GM10248 (cell line): ENCODE measurements at regions of chr10 and their contacts with region 1.

Region 1: GRCh38 chr10:44932517-44933450 is 21.6 kb downstream of the TMEM72 start:
- DNase-seq: peak; percentile 86
- CTCF ChIP-seq: peak; percentile 97

Region 2: DNA sequence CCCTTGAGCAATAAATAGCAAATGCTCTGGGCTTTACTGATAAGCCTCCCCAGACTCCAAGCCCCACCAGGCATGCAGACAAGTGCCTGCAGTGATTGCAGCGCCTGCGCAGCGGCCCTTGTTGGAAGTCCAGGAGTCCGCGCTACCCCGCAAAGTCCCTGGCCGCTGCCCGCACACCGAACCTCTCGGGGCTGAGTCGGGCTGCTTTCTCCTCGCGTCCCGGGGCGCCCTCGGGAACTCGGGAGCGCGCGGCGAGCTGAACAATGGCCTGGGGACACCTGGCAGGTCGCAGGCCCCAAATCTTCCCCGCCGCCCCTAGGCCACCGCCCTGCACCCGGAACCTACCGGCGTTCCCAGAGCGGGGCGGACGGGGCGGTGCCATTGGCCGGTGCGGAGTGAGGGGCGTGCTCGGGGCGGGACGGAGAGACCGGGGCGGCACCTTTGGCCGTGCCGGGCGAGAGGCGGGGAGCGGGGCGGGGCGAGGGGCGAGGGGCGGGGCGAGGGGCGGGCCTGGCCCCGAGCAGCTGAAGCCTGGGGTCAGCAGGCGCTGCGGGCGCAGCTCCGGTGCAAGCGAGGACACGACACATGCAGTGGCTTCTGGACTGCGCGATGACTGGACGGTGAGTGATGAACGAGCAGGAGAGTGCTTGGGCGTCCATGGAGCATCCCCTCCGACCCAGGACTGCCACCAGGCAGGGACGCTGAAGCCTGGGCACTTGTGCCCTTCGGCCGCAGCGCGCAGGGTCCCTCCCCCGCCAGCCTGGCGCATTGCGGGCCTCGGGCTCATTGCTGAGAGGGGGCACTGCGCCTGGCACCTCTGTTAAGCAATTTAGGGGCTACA is 26.7 kb after region 1 on chr10 and contains the start of gene RASSF4:
- CTCF ChIA-PET with region 1: interaction called, 211 read pairs
- POLR2A ChIA-PET with region 1: no interaction called
- DNase-seq: peak; percentile 99
- CTCF ChIP-seq: no peak

Region 3: DNA sequence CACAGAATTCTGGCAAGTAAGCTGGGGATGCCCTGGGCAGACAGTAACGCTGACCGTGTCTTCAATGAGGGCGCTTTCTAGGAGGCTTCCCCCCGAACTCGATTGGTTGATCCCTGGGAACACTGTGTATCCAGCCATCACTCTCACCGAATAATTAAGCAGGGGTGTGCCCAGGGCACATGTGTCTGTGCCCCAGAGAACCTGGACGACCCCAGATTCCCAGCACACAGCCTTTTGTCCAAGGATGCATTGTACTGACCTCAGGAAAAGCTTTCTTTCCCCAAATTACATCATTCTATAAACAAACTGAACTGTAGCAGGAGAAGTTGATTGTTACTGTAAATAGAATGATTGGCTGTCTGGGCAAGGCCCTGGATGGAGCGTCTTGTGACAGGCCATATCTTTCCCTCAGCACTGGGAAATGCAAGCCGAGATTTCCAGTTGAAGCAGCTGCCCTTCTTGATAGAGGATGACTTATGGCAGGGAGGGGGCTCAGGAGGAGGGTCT is 52.4 kb after region 1 on chr10:
- CTCF ChIA-PET with region 1: interaction called, 99 read pairs
- POLR2A ChIA-PET with region 1: interaction called, 3 read pairs
- DNase-seq: no peak
- CTCF ChIP-seq: no peak

Region 4: DNA sequence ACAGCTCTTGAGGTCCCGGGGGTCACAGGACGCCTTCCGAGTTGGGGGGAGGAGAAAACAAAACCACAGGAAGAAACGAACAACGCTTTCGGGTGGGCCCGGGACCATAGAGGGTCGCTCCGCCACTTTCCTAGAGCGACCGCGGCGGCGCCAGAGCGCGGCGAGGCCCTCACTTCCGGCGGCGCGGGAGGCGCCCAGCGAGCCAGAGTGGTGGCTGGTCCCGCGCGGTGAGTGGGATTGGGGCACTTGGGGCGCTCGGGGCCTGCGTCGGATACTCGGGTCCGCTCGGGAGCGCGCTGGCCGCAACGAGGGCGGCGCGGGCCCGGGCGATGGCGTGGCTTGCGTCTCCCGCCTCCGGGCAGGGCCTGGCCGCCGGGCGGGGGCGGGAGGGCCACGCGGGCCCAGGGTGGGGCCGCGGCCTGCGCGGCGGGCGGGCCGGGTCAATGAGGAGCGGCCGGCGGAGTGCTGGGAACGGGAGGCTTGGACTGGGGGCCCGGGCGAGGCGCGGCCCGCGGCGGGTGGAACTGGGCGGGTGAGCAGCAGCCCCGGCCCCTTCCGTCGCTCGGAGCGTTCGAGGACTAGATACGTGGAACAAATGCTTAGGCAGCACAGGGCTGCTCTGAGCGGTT is 68.1 kb after region 1 on chr10 and contains the start of gene ZNF22:
- CTCF ChIA-PET with region 1: interaction called, 19 read pairs
- POLR2A ChIA-PET with region 1: no interaction called
- DNase-seq: peak; percentile 79
- CTCF ChIP-seq: no peak